ENCODE measurements at regions of chr4 and their contacts with region 1.

Region 1: DNA sequence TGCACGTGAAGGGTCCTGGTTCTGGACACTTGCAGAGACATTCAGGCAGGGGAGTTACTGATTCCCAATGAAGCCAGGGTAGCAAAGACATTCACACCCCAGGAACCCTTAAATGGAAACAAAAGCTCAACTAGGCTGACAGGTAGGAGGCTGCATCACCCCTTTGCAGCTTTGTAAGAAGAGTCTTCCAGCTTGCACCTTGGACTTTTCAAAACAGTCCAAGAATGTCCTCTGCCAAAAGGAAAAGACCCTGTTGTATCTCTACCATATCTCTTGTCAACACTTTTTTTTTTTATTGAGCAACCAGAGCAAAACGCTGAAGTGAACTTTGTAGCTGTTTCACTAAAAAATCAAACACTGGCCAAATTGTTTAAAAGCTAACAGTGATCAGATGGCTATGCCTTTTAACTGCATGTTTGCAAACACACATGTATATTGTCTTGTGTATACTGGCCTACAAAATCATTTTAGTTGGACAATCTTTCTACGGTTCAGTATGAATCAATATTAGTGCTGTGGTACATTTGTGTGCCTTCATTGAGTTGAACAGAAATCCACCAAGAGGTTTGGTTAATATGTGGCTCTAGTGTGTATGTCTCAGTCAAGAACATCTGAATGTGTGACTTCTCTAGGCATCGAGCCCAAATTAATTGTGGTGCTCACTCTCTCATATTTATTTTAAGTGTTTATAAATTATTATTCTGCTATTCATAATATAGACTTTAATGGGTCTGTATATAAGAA is 18.5 kb upstream of the WWC2 start:
- DNase-seq: no peak
- ATAC-seq: no peak
- H3K4me3 ChIP-seq: no peak overlapping the region
- H3K27ac ChIP-seq: no peak overlapping the region
- H3K4me1 ChIP-seq: no peaks in the 10 kb centered on the region
- H3K27me3 ChIP-seq: no peaks in the 10 kb centered on the region
- CTCF ChIP-seq: no peak
- POLR2A ChIP-seq: no peak

Region 2: GRCh38 chr4:182975806-182976205 is 104.7 kb before region 1 on chr4:
- in situ Hi-C with region 1: no loop called
- intact Hi-C with region 1: no loop called
- DNase-seq: no peak
- ATAC-seq: no peak
- H3K4me3 ChIP-seq: no peak overlapping the region
- H3K27ac ChIP-seq: no peak overlapping the region
- H3K4me1 ChIP-seq: no peaks in the 10 kb centered on the region
- H3K27me3 ChIP-seq: no peaks in the 10 kb centered on the region
- CTCF ChIP-seq: no peak
- POLR2A ChIP-seq: no peak

Region 3: GRCh38 chr4:183130328-183131173 is 50.0 kb after region 1 on chr4:
- in situ Hi-C with region 1: loop called in 1 of 4 experiments (anchors 10 kb)
- intact Hi-C with region 1: no loop called
- DNase-seq: no peak
- ATAC-seq: no peak
- H3K4me3 ChIP-seq: no peak overlapping the region
- H3K27ac ChIP-seq: no peak overlapping the region
- H3K4me1 ChIP-seq: no peaks in the 10 kb centered on the region
- H3K27me3 ChIP-seq: no peaks in the 10 kb centered on the region
- CTCF ChIP-seq: no peak
- POLR2A ChIP-seq: no peak